Endothelial cell of umbilical vein (primary cell): ENCODE measurements at regions of chr15 and their contacts with region 1.

Region 1: GRCh38 chr15:83436458-83437158 is 10.5 kb upstream of the SH3GL3 start:
- DNase-seq: peak; percentile 47
- H3K4me3 ChIP-seq: no peak overlapping the region
- H3K27ac ChIP-seq: no peak overlapping the region
- H3K4me1 ChIP-seq: no peaks in the 10 kb centered on the region
- H3K27me3 ChIP-seq: peaks cover 0 to 3% of the 10 kb centered on the region in 2 experiments
- CTCF ChIP-seq: peak; percentile 20 to 45
- POLR2A ChIP-seq: no peak

Region 2: GRCh38 chr15:83426138-83426537 is 10.5 kb before region 1 on chr15:
- CTCF ChIA-PET with region 1: interaction called, 10 read pairs
- POLR2A ChIA-PET with region 1: no interaction called
- dilution Hi-C with region 1: no loop called
- intact Hi-C with region 1: no loop called
- DNase-seq: no peak
- H3K4me3 ChIP-seq: no peak overlapping the region
- H3K27ac ChIP-seq: no peak overlapping the region
- H3K4me1 ChIP-seq: no peaks in the 10 kb centered on the region
- H3K27me3 ChIP-seq: peaks cover 0 to 2% of the 10 kb centered on the region in 2 experiments
- CTCF ChIP-seq: no peak
- POLR2A ChIP-seq: no peak

Region 3: DNA sequence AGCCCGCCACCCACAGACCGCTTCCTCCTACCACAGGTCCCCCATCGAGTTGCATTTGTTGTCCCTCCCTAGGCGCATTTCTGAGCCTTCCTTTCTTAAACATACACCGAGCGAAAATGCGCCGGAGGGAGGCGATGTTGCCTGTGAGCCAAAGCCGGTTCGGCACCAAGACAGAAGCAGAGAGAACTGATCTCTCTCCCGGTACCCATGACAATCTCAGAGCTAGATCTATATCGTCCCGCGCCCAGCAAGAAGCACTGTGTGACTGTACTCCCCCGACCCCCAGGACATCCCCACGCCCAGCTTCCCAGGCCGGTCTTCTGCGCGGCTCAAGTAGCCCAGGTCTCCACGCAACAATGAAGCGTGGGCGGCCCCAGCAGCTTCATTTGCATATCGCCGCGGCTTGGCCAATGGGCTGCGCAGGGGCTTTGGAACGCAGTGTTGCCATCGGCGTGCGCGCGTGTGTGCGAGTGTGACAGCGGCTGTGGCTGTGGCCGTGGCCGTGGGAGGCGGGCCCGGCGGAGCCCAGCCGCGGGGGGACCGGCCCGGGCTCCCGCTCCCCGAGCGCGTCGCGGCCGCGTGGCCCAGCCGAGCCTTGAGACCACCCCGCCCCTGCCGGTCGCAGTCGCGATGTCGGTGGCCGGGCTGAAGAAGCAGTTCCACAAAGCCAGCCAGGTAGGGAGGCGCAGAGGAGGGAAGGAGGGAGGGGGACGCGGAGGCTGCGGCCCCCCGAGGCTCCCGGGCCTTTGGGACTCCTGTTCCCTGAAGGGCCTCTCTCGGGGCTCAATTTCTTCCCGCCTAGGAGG is 10.5 kb after region 1 on chr15 and contains the start of gene SH3GL3:
- CTCF ChIA-PET with region 1: interaction called, 22 read pairs
- POLR2A ChIA-PET with region 1: no interaction called
- dilution Hi-C with region 1: no loop called
- intact Hi-C with region 1: no loop called
- DNase-seq: peak; percentile 80
- H3K4me3 ChIP-seq: peak within 1 kb of the TSS; percentile 29 to 46 (median 32)
- H3K27ac ChIP-seq: no peak within 1 kb of the TSS
- H3K4me1 ChIP-seq: no peaks in the 10 kb centered on the region
- H3K27me3 ChIP-seq: peaks cover 8 to 19% of the 10 kb centered on the region in 2 experiments
- CTCF ChIP-seq: peak; percentile 7 to 35
- POLR2A ChIP-seq: no peak
- total RNA-seq, gene SH3GL3: not detected in 2 replicates

Region 4: GRCh38 chr15:83516935-83517334 is 80.3 kb after region 1 on chr15:
- CTCF ChIA-PET with region 1: no interaction called
- POLR2A ChIA-PET with region 1: no interaction called
- dilution Hi-C with region 1: no loop called
- intact Hi-C with region 1: no loop called
- DNase-seq: no peak
- H3K4me3 ChIP-seq: no peak overlapping the region
- H3K27ac ChIP-seq: no peak overlapping the region
- H3K4me1 ChIP-seq: no peaks in the 10 kb centered on the region
- H3K27me3 ChIP-seq: no peaks in the 10 kb centered on the region
- CTCF ChIP-seq: no peak
- POLR2A ChIP-seq: no peak

Region 5: DNA sequence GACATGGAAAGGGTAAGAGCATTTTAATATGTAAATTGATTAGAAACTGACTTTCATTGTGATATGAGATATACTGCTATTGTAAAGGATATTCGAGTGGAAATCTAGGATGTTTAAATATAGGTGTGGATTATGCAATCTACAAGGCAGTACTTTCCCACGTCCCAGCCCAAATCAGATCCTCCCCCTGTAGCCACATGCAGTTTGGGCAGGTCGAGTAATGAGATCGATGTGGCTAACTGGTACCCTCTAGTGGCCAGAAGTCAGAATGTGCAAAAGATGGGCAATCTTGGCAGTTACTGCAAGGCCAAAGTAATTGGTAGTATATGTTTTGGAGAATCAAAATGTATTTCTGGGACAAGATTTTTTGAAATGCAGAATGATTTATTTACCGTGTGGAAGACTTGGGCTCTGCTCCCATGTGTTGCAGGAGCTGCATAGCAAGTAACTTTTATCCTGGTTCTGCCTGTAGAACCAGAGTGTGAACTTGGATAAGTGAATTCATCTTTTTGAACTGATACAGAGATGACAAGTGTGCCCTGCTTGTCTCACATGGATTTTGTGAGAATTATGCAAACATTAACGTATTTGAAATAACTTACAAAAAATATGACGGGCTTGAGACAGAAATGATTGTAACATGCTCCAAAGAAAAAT is 122.8 kb after region 1 on chr15:
- CTCF ChIA-PET with region 1: interaction called, 58 read pairs
- POLR2A ChIA-PET with region 1: no interaction called
- dilution Hi-C with region 1: no loop called
- intact Hi-C with region 1: loop called (anchors 1 kb)
- DNase-seq: peak; percentile 61
- H3K4me3 ChIP-seq: no peak overlapping the region
- H3K27ac ChIP-seq: no peak overlapping the region
- H3K4me1 ChIP-seq: no peaks in the 10 kb centered on the region
- H3K27me3 ChIP-seq: no peaks in the 10 kb centered on the region
- CTCF ChIP-seq: peak; percentile 70 to 77
- POLR2A ChIP-seq: no peak

Region 6: GRCh38 chr15:83571820-83572707 is 135.5 kb after region 1 on chr15:
- CTCF ChIA-PET with region 1: interaction called, 28 read pairs
- POLR2A ChIA-PET with region 1: no interaction called
- dilution Hi-C with region 1: no loop called
- intact Hi-C with region 1: loop called (anchors 2 kb)
- DNase-seq: peak; percentile 28
- H3K4me3 ChIP-seq: no peak overlapping the region
- H3K27ac ChIP-seq: no peak overlapping the region
- H3K4me1 ChIP-seq: no peaks in the 10 kb centered on the region
- H3K27me3 ChIP-seq: no peaks in the 10 kb centered on the region
- CTCF ChIP-seq: peak; percentile 36 to 38
- POLR2A ChIP-seq: no peak